ENCODE measurements at regions of chr9 and their contacts with region 1.

Region 1: GRCh38 chr9:93108291-93109041 is 12.4 kb downstream of the CARD19 start:
- DNase-seq: no peak
- ATAC-seq: 0 out of 2 replicates have a peak, but pooled peaks have one; percentile 10
- H3K4me3 Mint-ChIP-seq: no peak overlapping the region
- H3K27ac Mint-ChIP-seq: no peak overlapping the region
- H3K4me1 Mint-ChIP-seq: peaks cover 7% of the 10 kb centered on the region; the same call in 1 of the 2 replicates
- H3K27me3 Mint-ChIP-seq: no peaks in the 10 kb centered on the region
- CTCF ChIP-seq: no peak

Region 2: GRCh38 chr9:92941861-92942260 is 166.6 kb before region 1 on chr9:
- CTCF ChIA-PET with region 1: no interaction called
- POLR2A ChIA-PET with region 1: no interaction called
- DNase-seq: no peak
- ATAC-seq: no peak
- H3K4me3 Mint-ChIP-seq: no peak overlapping the region
- H3K27ac Mint-ChIP-seq: no peak overlapping the region
- H3K4me1 Mint-ChIP-seq: peaks cover 7% of the 10 kb centered on the region
- H3K27me3 Mint-ChIP-seq: peaks cover 3% of the 10 kb centered on the region; the same call in 1 of the 2 replicates
- CTCF ChIP-seq: no peak

Region 3: GRCh38 chr9:93119953-93120845 is 11.7 kb after region 1 on chr9:
- CTCF ChIA-PET with region 1: interaction called, 18 read pairs
- POLR2A ChIA-PET with region 1: no interaction called
- DNase-seq: peak; percentile 42
- ATAC-seq: peak; percentile 79
- H3K4me3 Mint-ChIP-seq: no peak overlapping the region
- H3K27ac Mint-ChIP-seq: peak overlapping the region; percentile 89; the same call in 1 of the 2 replicates
- H3K4me1 Mint-ChIP-seq: peaks cover 13% of the 10 kb centered on the region
- H3K27me3 Mint-ChIP-seq: no peaks in the 10 kb centered on the region
- CTCF ChIP-seq: no peak

Region 4: DNA sequence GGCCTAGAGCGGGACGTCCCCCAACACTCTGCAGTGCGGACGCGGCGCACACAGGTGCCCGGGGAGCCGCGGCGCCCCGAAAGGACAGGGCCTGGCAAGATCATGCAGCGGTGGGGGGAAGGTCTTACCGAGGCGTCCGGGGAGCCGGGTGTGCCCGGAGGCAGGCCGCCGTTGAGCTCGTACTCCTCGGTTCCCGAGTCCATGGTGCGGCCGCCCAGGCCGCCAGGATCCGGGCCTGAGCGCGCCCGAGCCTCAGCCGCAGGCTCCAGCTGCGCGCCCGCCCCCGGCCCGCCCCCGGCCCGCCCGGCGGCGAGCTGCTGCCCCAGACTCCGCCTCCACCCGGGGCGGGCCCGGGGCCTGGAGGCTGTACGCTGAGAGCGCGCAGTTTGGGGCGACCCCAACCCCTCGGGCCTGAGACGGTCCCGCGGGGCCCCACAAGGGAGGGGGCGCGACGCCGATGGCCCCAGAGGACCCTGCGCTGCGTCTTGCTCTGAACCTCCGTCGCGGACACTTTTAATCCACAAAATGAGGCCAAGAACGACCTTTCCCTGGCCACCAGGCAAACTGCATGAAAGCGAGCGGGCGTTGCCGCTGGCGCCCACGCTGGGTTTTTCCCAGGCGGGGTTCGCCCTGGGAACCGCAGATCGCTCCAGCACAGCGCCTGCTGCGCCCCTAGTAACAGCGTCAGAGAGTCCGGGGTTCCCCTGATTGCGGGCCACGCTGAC is 25.7 kb after region 1 on chr9 and contains the start of gene NINJ1:
- CTCF ChIA-PET with region 1: interaction called, 11 read pairs
- POLR2A ChIA-PET with region 1: interaction called, 4 read pairs
- DNase-seq: peak; percentile 62
- ATAC-seq: peak; percentile 87
- H3K4me3 Mint-ChIP-seq: peak within 1 kb of the TSS; percentile 79
- H3K27ac Mint-ChIP-seq: no peak within 1 kb of the TSS
- H3K4me1 Mint-ChIP-seq: peaks cover 30% of the 10 kb centered on the region
- H3K27me3 Mint-ChIP-seq: peaks cover 20% of the 10 kb centered on the region
- CTCF ChIP-seq: no peak
- total RNA-seq, gene NINJ1: 35.6 to 41.3 TPM (median 37.7 TPM) in 3 replicates

Region 5: GRCh38 chr9:93326056-93326455 is 217.6 kb after region 1 on chr9:
- CTCF ChIA-PET with region 1: no interaction called
- POLR2A ChIA-PET with region 1: no interaction called
- DNase-seq: no peak
- ATAC-seq: no peak
- H3K4me3 Mint-ChIP-seq: no peak overlapping the region
- H3K27ac Mint-ChIP-seq: no peak overlapping the region
- H3K4me1 Mint-ChIP-seq: peaks cover 17% of the 10 kb centered on the region
- H3K27me3 Mint-ChIP-seq: no peaks in the 10 kb centered on the region
- CTCF ChIP-seq: no peak